Activated B cell treated with CpG ODN at 0.5 μM for 24 hours (primary cell): ENCODE measurements at regions of chr1 and their contacts with region 1.

Region 1: GRCh38 chr1:2044510-2045319 is 5.5 kb upstream of the PRKCZ start:
- DNase-seq: peak; percentile 87
- ATAC-seq: peak; percentile 86
- H3K4me3 Mint-ChIP-seq: peak overlapping the region; percentile 46
- H3K27ac Mint-ChIP-seq: no peak overlapping the region
- H3K4me1 Mint-ChIP-seq: peaks cover 21% of the 10 kb centered on the region
- H3K27me3 Mint-ChIP-seq: peaks cover 11% of the 10 kb centered on the region
- CTCF ChIP-seq: peak; percentile 30

Region 2: DNA sequence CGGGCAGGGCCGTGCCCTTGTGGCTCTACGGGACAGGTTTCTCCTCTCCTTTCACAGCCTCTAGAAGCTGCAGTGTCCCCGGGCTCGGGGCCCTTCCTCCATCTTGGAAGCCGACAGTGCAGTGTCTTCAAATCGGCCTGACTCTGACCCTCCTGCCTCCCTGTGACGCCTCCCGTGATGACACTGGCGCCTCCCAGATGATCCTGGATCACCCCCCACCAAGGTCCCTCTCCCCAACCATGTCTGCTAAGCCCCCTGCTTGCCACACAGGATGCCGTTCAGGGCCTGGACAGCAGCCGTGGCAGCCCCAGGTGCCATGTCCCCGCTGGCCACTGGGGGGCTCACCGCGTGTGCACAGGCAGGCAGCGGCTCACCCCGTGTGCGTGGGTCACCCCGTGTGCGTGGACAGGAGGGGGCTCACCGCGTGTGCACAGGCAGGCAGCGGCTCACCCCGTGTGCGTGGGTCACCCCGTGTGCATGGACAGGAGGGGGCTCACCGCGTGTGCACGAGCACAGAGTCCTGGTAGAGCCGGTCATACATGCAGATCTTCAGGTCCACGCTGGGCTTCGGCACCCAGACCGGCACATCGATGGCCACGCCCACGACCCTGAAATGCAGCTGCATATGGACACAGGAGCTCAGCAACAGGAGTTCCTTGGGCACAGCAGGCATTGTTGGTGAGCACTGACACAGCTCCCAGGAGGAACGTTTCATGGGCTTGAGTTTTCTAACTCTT is 100.7 kb before region 1 on chr1:
- CTCF ChIA-PET with region 1: interaction called, 18 read pairs
- POLR2A ChIA-PET with region 1: no interaction called
- intact Hi-C with region 1: loop called (anchors 1 kb)
- DNase-seq: peak; percentile 63
- ATAC-seq: peak; percentile 94
- H3K4me3 Mint-ChIP-seq: peak overlapping the region; percentile 9
- H3K27ac Mint-ChIP-seq: no peak overlapping the region
- H3K4me1 Mint-ChIP-seq: peaks cover 6% of the 10 kb centered on the region
- H3K27me3 Mint-ChIP-seq: peaks cover 2% of the 10 kb centered on the region
- CTCF ChIP-seq: peak; percentile 48

Region 3: DNA sequence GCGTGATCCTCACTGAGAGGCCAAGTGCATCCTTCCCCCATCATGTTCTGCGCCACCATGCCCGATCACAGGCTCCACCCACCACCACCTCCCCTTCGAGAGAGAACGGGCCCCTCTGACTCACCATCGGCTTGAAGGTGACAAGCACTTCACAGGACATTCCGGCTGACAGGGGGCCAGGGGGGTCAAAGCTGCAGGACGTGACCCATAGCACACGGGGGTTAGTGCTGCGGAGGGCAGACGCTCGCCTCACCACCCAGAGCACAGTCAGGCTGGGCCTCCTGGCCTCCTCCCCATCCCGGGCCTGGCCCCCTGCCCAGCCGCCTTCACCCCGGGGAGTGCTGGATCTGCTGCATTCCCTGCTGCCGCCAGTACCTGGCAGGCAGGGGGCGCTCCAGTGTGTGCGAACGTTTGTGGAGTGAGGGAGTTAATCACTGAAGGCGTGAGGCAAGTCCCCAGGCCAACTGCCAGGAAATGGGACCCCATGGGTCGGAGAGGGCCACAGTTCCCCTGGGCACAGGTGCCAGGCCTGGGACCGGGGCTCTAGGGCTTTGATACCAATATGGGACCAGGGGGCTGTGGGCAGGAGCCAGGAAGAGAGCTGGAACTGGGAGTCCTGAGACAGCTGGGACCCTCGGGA is 84.8 kb before region 1 on chr1:
- CTCF ChIA-PET with region 1: interaction called, 6 read pairs
- POLR2A ChIA-PET with region 1: no interaction called
- intact Hi-C with region 1: loop called (anchors 1 kb)
- DNase-seq: peak; percentile 34
- ATAC-seq: peak; percentile 31
- H3K4me3 Mint-ChIP-seq: no peak overlapping the region
- H3K27ac Mint-ChIP-seq: no peak overlapping the region
- H3K4me1 Mint-ChIP-seq: no peaks in the 10 kb centered on the region
- H3K27me3 Mint-ChIP-seq: peaks cover 30% of the 10 kb centered on the region
- CTCF ChIP-seq: no peak

Region 4: DNA sequence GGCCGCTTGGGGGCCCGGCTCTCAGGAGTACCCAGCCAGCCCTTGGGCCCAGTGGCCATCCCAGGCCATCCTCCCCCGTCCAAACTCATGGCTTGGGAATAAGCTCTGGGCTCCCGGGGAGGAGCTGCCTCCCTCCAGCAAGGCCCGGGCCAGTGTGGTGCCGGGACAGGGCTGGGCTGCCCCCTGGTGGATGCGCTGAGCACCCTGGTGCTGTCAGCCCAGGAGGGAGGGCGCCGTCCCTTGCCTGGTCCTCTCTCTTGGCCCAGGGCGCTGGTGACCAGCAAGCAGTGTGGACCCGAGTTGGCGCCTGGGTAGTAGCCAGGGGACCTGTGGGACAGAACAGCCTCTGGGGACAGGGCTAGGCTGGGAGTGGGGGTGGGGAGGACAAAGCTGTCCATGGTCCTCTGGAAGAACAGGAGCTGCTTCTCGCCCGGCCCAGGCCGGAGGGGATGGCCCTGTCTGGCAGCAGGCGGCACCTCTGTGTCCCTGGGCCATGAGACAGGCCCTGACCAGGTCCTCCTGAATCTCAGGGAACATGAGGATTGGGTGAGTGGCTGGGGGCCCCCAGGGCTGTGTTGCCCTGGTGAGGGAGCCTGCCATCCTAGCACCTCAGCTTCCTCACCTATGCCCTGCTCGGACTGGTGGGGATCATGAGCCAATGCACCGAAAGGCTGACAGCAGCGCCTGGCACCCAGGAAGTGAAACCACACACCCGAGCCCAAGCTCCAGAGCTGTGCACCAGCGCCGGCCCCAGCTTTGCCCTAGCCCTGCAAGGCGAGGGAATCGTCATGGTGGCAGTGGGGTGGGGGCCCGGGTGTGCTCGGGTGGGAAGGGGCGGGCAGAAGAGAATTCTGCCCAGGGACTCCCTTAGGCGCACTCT is 337.3 kb after region 1 on chr1:
- CTCF ChIA-PET with region 1: interaction called, 3 read pairs
- POLR2A ChIA-PET with region 1: no interaction called
- intact Hi-C with region 1: loop called (anchors 5 kb)
- DNase-seq: peak; percentile 74
- ATAC-seq: peak; percentile 85
- H3K4me3 Mint-ChIP-seq: no peak overlapping the region
- H3K27ac Mint-ChIP-seq: no peak overlapping the region
- H3K4me1 Mint-ChIP-seq: peaks cover 25% of the 10 kb centered on the region
- H3K27me3 Mint-ChIP-seq: no peaks in the 10 kb centered on the region
- CTCF ChIP-seq: peak; percentile 31